Mammary epithelial cell (primary cell): ENCODE measurements at regions of chr12 and their contacts with region 1.

Region 1: GRCh38 chr12:115752913-115753726 is 524.4 kb downstream of the MED13L start:
- DNase-seq: peak; percentile 52
- H3K4me3 ChIP-seq: peak overlapping the region in 1 of 3 experiments; percentile 67
- H3K27ac ChIP-seq: no peak overlapping the region
- H3K4me1 ChIP-seq: peaks cover 9% of the 10 kb centered on the region
- H3K27me3 ChIP-seq: no peaks in the 10 kb centered on the region
- CTCF ChIP-seq: peak; percentile 55 to 67

Region 2: DNA sequence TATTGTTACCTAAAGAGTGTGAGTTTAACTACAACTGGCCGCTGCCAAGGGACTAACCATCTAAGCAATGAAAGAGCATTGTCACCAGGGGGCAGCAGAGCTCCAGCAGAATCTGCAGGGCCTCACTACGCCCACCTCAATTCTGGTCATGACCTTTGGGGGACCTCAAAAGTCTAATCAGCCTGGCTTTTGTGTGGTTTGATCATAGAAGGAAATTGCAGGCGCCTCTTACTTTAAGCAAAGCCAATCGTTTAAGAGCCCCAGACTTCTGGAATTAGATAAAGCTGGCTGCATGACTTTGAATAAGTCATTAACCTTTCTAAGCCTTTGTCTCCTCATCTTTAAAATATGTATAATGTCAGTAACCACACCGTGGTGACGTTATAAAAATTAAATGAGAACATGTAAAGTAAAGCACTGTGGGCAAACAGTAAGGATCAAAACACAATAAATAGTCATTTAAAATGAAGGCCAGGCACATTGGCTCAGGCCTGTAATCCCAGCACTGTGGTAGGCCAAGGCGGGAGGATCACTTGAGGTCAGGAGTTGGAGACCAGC is 1127.7 kb before region 1 on chr12:
- CTCF ChIA-PET with region 1: no interaction called
- dilution Hi-C with region 1: no loop called
- in situ Hi-C with region 1: no loop called
- intact Hi-C with region 1: loop called (anchors 1 kb)
- DNase-seq: peak; percentile 26
- H3K4me3 ChIP-seq: no peak overlapping the region
- H3K27ac ChIP-seq: no peak overlapping the region
- H3K4me1 ChIP-seq: peaks cover 3% of the 10 kb centered on the region
- H3K27me3 ChIP-seq: no peaks in the 10 kb centered on the region
- CTCF ChIP-seq: peak; percentile 90 to 93

Region 3: DNA sequence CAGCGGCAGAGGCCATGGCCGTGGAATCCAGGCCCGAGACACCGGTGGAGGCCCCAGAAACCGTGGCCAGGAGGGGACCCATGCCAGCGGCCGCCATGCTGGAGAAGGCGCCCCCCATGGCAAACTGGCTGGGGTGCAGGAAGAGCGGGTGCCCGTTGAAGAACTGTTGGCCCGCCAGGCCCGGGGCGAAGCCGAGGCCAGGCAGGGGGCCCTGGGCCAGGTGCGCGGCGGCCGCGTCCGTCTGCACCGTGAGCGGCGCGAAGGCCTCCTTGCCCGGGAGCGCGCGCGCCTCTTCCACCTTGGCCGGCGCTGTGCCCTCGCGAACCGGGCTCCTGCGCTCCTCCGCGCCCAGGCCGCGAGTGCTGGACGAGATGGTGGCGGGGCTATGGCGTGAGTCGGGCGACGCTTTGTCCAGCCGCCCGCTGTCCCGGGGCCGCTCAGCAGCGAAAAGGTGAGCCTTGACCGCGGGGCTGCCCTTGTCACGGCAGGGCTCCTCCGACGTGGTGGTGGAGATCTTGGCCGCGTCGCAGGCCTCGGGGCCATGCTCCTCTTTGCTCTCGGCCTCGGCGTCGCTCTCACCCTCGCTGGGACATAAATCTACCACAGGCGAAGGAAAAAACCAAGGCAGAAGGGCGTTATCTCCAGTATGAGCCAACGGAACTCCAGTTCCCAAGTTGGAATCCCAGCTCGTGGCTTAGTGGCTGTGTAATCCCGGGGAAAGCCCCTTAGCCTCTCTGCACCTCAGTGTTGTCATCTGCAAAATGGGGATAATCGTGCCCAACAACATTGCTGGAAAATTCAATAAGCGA is 1078.7 kb before region 1 on chr12:
- CTCF ChIA-PET with region 1: interaction called, 4 read pairs
- dilution Hi-C with region 1: loop called (anchors 5 kb)
- in situ Hi-C with region 1: loop called in 1 of 2 experiments (anchors 5 kb)
- intact Hi-C with region 1: no loop called
- DNase-seq: peak; percentile 36
- H3K4me3 ChIP-seq: peak overlapping the region; percentile 24 to 46 (median 33)
- H3K27ac ChIP-seq: peak overlapping the region; percentile 82
- H3K4me1 ChIP-seq: peaks cover 88% of the 10 kb centered on the region
- H3K27me3 ChIP-seq: no peaks in the 10 kb centered on the region
- CTCF ChIP-seq: peak in 1 of 2 donors; percentile 4

Region 4: DNA sequence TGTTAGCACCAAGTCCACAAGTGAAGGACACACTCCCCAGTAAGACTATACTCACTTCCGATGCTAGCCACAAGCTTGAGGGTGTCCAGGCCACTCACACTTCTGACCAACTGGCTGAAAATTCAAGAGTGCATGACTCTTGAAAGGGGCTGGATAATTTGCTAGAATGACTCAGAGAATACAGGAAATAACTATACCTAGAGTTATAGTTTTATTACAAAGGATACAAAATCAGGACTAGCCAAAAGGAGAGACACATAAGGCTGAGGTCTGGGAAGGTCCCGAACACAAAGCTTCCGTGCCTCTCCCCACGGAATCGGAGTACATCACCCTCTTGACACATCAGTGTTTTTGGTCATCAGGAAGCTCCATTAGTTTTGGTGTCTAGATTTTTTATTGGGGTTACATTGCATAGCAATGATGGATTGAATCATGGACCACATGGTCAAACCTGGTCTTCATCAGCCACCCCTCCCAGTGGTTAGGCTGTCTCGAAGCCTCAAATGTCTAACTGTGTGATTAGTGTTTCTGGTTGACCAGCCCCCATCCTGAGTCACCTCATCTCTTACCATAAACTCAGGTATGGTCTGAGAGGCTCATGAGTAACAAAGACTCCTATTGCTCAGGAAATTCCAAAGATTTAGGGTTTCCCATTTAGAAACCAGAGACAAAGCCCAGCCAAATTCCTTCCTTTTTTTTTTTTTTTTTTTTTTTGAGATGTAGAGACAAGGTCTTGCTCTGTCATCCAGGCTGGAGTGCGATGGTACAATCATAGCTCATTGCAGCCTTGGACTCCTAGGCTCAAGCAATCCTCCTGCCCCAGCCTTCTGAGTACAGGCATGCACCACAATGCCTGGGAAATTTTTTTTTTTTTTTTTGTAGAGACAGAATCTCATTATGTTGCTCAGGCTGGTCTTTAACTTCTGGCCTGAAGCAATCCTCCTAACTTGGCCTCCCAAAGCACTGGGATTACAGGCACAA is 597.2 kb before region 1 on chr12:
- CTCF ChIA-PET with region 1: no interaction called
- dilution Hi-C with region 1: no loop called
- in situ Hi-C with region 1: no loop called
- intact Hi-C with region 1: loop called (anchors 10 kb)
- DNase-seq: peak; percentile 100
- H3K4me3 ChIP-seq: no peak overlapping the region
- H3K27ac ChIP-seq: peak overlapping the region; percentile 83
- H3K4me1 ChIP-seq: peaks cover 31% of the 10 kb centered on the region
- H3K27me3 ChIP-seq: no peaks in the 10 kb centered on the region
- CTCF ChIP-seq: no peak

Region 5: DNA sequence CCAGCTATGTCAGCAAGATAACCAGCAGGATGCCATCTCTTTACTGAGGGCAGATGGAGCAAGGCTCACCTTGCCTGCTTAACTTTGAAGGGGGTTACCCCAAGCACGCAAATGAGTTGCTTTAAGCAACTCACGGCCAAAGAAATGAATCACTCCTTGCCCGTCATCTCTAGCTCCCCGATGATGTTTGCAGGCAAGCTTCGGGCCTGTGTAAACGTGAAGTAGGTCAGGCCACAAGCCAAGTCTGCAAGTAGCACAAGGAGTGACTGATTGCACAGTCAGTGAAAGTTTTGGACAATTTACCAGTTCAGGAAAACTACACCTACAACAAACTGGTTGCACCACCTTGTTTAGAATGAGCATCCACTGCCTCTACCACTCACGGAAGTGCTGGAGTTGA is 369.5 kb before region 1 on chr12:
- CTCF ChIA-PET with region 1: no interaction called
- dilution Hi-C with region 1: no loop called
- in situ Hi-C with region 1: no loop called
- intact Hi-C with region 1: loop called (anchors 1 kb)
- DNase-seq: peak; percentile 100
- H3K4me3 ChIP-seq: no peak overlapping the region
- H3K27ac ChIP-seq: peak overlapping the region; percentile 77
- H3K4me1 ChIP-seq: peaks cover 14% of the 10 kb centered on the region
- H3K27me3 ChIP-seq: no peaks in the 10 kb centered on the region
- CTCF ChIP-seq: no peak

Region 6: GRCh38 chr12:115722181-115722580 is 30.9 kb before region 1 on chr12:
- CTCF ChIA-PET with region 1: no interaction called
- dilution Hi-C with region 1: no loop called
- in situ Hi-C with region 1: no loop called
- intact Hi-C with region 1: no loop called
- DNase-seq: no peak
- H3K4me3 ChIP-seq: no peak overlapping the region
- H3K27ac ChIP-seq: no peak overlapping the region
- H3K4me1 ChIP-seq: no peaks in the 10 kb centered on the region
- H3K27me3 ChIP-seq: no peaks in the 10 kb centered on the region
- CTCF ChIP-seq: no peak

Region 7: GRCh38 chr12:115916910-115917668 is 164.0 kb after region 1 on chr12:
- CTCF ChIA-PET with region 1: no interaction called
- dilution Hi-C with region 1: no loop called
- in situ Hi-C with region 1: no loop called
- intact Hi-C with region 1: loop called (anchors 2 kb)
- DNase-seq: peak; percentile 53
- H3K4me3 ChIP-seq: peak overlapping the region in 2 of 3 experiments; percentile 31 to 32
- H3K27ac ChIP-seq: no peak overlapping the region
- H3K4me1 ChIP-seq: peaks cover 5% of the 10 kb centered on the region
- H3K27me3 ChIP-seq: no peaks in the 10 kb centered on the region
- CTCF ChIP-seq: peak; percentile 64 to 93

Region 8: DNA sequence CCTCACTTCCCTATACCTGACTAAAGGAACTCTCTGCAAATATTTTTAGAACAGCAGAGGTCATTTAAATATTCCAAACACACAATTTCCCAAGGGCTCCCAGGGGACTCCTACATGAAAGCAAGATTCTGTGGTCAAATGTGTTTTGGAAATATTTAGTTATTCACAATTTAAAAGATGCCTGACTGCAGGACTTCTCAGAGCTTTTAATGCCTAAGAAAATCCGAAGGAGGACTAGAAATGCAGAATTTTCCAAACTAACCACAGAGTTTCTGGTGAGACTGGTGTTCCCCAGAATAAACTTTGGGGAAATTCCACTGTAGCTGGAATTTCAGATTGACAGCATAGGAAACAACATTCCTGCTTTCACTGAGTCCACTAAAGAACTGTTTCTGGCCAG is 721.2 kb after region 1 on chr12:
- CTCF ChIA-PET with region 1: no interaction called
- dilution Hi-C with region 1: no loop called
- in situ Hi-C with region 1: no loop called
- intact Hi-C with region 1: no loop called
- DNase-seq: peak; percentile 67
- H3K4me3 ChIP-seq: no peak overlapping the region
- H3K27ac ChIP-seq: no peak overlapping the region
- H3K4me1 ChIP-seq: no peaks in the 10 kb centered on the region
- H3K27me3 ChIP-seq: no peaks in the 10 kb centered on the region
- CTCF ChIP-seq: no peak